ENCODE measurements at regions of chr16 and their contacts with region 1.

Region 1: GRCh38 chr16:57519796-57520360 is 16.5 kb downstream of the CCDC102A start:
- DNase-seq: no peak
- H3K4me3 ChIP-seq: no peak overlapping the region
- CTCF ChIP-seq: peak; percentile 95

Region 2: DNA sequence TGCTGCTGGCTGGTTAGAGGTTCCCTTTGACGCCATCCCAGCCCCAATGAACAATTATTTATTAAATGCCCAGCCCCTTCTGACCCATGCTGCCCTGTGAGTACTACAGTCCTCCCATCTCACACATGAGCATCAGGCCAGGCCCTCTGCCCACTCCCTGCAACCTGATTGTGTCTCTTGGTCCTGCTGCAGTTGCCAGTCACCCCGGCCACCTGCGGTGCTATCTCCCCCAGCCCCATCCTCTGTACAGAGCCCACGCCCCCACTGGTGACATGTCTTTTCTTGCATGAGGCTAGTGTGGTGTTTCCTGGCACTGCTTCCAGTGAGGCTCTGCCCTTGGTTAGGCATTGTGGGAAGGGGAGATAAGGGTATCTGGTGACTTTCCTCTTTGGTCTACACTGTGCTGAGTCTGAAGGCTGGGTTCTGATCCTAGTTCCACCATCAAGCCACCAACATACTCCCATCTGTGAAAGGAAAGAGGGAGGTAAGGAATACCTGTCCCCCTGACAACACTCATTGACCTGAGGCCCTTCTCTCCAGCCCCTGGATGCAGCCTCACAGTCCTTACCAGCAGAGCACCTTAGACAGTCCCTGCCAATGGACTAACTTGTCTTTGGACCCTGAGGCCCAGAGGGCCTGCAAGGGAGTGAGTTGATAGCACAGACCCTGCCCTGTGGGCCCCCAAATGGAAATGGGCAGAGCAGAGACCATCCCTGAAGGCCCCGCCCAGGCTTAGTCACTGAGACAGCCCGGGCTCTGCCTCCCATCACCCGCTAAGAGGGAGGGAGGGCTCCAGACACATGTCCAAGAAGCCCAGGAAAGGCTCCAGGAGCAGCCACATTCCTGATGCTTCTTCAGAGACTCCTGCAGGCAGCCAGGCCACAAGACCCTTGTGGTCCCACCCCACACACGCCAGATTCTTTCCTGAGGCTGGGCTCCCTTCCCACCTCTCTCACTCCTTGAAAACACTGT is 136.3 kb before region 1 on chr16:
- CTCF ChIA-PET with region 1: no interaction called
- POLR2A ChIA-PET with region 1: no interaction called
- DNase-seq: no peak
- H3K4me3 ChIP-seq: no peak overlapping the region
- CTCF ChIP-seq: no peak

Region 3: GRCh38 chr16:57422026-57422944 is 97.6 kb before region 1 on chr16:
- CTCF ChIA-PET with region 1: interaction called, 368 read pairs
- POLR2A ChIA-PET with region 1: no interaction called
- DNase-seq: peak; percentile 5
- H3K4me3 ChIP-seq: no peak overlapping the region
- CTCF ChIP-seq: peak; percentile 73

Region 4: GRCh38 chr16:57462209-57462977 is 57.5 kb before region 1 on chr16 and contains the start of gene POLR2C:
- CTCF ChIA-PET with region 1: interaction called, 40 read pairs
- POLR2A ChIA-PET with region 1: interaction called, 4 read pairs
- DNase-seq: peak; percentile 12
- H3K4me3 ChIP-seq: peak within 1 kb of the TSS; percentile 69
- CTCF ChIP-seq: peak; percentile 94

Region 5: GRCh38 chr16:57485916-57486857 is 33.7 kb before region 1 on chr16 and contains the start of gene DOK4:
- CTCF ChIA-PET with region 1: interaction called, 103 read pairs
- POLR2A ChIA-PET with region 1: no interaction called
- DNase-seq: no peak
- H3K4me3 ChIP-seq: peak within 1 kb of the TSS; percentile 70
- CTCF ChIP-seq: no peak

Region 6: DNA sequence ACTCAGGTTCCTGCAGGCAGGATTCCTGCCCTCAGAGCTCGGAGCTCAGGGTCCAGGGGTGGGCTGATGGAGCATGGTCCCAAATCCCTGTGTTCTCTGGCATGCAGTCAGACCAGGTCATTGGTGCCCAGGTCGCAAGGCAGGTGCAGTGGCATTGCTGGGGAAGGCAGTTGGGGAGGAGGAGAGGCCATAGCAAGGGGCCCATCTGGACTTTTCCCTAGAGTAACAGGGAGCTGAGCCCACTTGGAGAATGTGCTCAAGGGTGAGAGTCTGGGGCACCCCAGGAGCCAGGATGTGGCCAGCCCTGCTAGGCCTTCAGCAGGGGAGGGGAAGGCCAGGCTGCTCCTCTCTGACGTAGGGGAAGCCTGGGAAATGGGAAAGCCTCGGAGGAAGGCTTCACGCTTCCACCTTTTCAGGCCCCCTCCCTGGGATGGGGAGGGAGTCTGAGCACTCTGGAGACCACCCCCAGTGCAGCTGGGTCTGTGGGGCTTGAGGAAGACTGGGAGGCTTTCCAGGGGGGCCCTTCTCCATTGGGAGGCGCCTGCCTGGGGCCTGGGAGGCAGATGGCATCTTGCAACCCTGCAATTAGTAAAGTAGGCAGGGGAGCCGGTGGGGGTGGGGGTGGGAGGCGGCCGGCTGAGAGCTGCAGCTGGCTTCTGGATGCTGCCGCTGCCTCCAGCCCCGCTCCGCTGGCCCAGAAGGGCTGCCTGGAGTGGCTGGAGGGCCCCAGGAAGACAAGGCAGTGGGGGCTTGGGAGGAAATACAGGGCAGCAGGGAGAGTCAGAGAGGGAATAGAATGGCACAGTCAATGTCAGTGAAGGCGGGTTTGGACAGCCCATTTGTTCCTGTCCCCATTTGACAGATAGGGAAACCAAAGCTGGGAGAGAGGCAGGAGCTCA is 12.5 kb before region 1 on chr16:
- CTCF ChIA-PET with region 1: interaction called, 74 read pairs
- POLR2A ChIA-PET with region 1: no interaction called
- DNase-seq: no peak
- H3K4me3 ChIP-seq: no peak overlapping the region
- CTCF ChIP-seq: no peak

Region 7: GRCh38 chr16:57536306-57537193 is 16.7 kb after region 1 on chr16 and contains the start of gene CCDC102A:
- CTCF ChIA-PET with region 1: interaction called, 48 read pairs
- POLR2A ChIA-PET with region 1: no interaction called
- DNase-seq: no peak
- H3K4me3 ChIP-seq: peak within 1 kb of the TSS; percentile 83
- CTCF ChIP-seq: no peak